ENCODE measurements at regions of chr6 and their contacts with region 1.

Region 1: GRCh38 chr6:40999569-40999968 is 39.5 kb downstream of the UNC5CL start:
- DNase-seq: no peak

Region 2: DNA sequence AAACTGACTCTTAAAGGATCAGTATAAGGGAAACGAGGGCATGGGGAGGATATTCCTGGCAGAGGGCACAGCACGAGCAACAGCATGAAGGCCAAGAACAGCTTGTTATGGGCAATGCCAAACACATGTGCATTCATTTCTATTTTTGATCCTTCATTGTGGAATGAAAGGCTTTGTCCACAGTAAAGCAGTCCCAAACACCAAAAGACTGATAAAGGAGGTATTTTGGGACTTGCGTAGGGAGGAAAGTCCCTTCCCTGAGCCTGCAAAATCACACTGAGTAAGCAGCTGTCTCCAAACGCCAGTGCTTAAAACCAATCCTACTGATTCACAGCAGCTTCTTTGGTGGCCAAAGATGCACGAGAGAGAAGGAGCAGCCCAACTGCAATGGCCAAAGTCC is 98.8 kb before region 1 on chr6:
- intact Hi-C with region 1: loop called (anchors 2 kb)
- DNase-seq: no peak

Region 3: DNA sequence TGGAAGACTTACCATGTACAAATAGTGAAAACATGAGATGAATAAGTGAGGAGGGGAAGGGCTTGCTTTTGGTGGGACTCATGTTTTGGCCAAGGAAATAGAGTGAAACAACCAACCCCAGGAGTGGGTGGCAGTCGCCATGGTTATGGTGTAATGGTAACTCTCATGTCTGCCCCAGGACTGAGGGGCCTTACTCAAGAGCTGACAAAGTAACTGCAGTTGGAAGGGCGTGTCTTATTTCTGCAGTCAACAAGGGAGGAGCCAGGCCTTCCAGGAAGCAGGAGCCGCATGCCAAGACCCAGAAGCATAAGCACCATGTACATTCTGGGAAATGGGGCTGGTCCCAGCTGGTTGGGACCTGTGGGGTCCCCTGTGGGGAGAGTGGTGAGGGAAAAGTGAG is 69.0 kb before region 1 on chr6:
- intact Hi-C with region 1: loop called (anchors 2 kb)
- DNase-seq: no peak

Region 4: DNA sequence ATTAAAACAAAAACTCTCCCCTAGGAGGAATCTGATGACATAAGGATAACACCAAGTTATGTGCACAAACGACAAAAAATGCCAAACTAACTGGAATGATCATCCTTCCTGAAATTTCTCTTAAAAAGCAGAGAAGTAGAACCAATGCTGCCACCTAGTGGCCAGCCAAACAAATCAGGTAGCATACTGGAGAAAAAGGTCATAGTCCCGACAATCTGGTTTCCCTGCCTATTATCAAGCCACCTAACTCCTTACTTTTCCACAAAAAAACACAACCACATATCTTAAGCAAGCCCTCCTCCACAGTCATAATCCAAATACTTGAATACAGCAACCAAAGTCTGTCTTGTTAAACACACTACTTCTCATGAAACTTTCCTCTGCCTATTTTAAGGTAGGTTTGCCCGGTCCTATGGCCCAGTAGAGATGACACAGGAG is 67.3 kb after region 1 on chr6:
- intact Hi-C with region 1: loop called (anchors 5 kb)
- DNase-seq: peak; percentile 85

Region 5: DNA sequence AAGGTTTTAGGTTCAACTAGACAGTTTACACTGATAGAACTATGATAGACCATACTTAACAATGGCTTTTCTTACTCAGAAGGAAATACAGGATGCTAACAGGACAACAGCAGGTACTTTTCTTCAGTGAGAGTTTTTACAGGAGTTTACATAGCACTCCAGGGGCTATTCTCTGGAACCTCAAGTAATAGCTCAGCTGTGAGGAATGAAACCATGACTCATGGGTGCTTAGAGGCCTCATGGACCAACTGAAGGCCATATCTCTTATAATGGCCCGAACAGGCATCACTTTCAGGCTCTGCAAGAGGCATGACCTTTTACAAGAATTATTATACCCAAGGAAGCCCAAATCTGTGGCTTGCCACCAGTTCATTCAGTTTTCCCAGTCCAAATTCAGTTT is 122.8 kb after region 1 on chr6:
- intact Hi-C with region 1: no loop called
- DNase-seq: no peak